ENCODE measurements at regions of chr16 and their contacts with region 1.

Region 1: DNA sequence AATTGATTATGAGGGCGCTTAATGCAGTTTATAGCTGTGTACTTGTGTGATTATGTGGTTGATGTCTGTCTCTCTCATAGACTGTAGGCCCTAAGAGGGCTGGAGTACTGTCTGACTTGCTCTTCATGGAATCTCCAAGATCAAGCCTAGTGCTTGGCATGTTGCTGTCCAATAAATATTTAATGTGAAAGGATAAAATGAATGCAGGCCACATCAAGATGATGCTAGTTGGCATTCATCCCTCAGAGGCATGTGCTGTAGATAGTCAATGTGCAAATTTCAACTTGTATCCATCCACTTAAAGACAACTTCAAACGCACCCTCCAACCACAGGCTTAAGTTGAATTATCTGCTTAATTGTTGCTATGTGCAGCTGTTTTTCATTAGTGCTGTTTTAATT is 771.9 kb upstream of the RBFOX1 start:
- DNase-seq: no peak
- ATAC-seq: no peak
- H3K4me3 ChIP-seq: no peak overlapping the region
- H3K27ac ChIP-seq: no peak overlapping the region
- H3K4me1 ChIP-seq: no peaks in the 10 kb centered on the region
- H3K27me3 ChIP-seq: no peaks in the 10 kb centered on the region

Region 2: GRCh38 chr16:6496996-6497395 is 63.7 kb before region 1 on chr16:
- intact Hi-C with region 1: loop called in 1 of 4 experiments (anchors 10 kb)
- DNase-seq: no peak
- ATAC-seq: no peak
- H3K4me3 ChIP-seq: no peak overlapping the region
- H3K27ac ChIP-seq: no peak overlapping the region
- H3K4me1 ChIP-seq: no peaks in the 10 kb centered on the region
- H3K27me3 ChIP-seq: no peaks in the 10 kb centered on the region

Region 3: DNA sequence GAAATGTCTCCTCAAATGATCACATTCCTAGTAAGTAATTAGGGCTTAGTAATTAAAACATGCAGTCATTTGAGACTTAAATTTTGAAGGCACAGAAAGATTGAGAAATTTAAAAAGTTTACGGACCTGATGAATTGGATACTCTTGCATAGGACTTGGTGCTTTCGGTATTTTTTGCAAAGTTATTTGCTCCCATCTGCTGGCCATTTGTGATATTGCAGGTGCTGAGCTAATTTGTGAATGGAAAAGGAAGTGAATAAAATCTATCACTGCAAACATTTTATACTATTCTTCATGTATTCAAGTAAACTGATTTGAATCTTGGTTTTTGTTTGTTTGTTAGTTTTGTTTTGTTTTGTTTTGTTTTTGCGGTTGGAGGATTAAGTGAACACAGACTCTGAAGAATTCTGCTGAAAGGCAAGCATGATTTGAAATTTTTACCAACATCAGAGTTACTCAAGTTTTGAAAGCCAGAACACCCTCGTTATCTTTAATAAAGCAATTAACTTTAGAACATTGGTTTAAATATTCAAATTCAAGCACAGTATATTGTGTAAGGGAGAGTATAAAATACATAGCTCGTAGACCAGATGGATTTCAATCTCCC is 82.5 kb after region 1 on chr16:
- intact Hi-C with region 1: no loop called
- DNase-seq: peak in 1 of 3 donors; percentile 47
- ATAC-seq: no peak
- H3K4me3 ChIP-seq: no peak overlapping the region
- H3K27ac ChIP-seq: no peak overlapping the region
- H3K4me1 ChIP-seq: no peaks in the 10 kb centered on the region
- H3K27me3 ChIP-seq: no peaks in the 10 kb centered on the region

Region 4: DNA sequence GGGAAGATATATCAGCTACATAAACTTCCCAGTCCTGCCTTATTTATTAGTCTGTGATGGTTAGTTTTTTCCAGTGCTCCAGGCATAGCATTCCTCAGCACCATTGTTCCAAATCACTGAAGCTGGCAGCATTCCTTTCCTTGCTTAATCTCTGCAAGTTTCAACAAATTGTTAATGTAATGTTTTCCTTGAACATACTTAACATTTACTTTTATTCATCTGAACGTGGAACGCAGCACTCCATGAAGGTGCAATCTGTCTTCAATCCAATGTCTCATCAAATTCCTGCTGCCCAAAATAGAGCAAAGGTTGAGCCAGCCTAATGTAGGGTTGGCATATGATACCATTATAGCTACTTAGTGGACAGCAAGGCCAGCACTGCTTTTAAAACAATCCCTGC is 330.8 kb after region 1 on chr16:
- intact Hi-C with region 1: no loop called
- DNase-seq: no peak
- ATAC-seq: no peak
- H3K4me3 ChIP-seq: no peak overlapping the region
- H3K27ac ChIP-seq: no peak overlapping the region
- H3K4me1 ChIP-seq: no peaks in the 10 kb centered on the region
- H3K27me3 ChIP-seq: no peaks in the 10 kb centered on the region